ENCODE measurements at regions of chr11 and their contacts with region 1.

Region 1: GRCh38 chr11:3021125-3021524 is 29.0 kb upstream of the NAP1L4 start:
- DNase-seq: peak; percentile 64
- H3K4me3 Mint-ChIP-seq: no peak overlapping the region
- H3K27ac Mint-ChIP-seq: no peak overlapping the region
- H3K4me1 Mint-ChIP-seq: peaks cover 68% of the 10 kb centered on the region
- H3K27me3 Mint-ChIP-seq: no peaks in the 10 kb centered on the region

Region 2: DNA sequence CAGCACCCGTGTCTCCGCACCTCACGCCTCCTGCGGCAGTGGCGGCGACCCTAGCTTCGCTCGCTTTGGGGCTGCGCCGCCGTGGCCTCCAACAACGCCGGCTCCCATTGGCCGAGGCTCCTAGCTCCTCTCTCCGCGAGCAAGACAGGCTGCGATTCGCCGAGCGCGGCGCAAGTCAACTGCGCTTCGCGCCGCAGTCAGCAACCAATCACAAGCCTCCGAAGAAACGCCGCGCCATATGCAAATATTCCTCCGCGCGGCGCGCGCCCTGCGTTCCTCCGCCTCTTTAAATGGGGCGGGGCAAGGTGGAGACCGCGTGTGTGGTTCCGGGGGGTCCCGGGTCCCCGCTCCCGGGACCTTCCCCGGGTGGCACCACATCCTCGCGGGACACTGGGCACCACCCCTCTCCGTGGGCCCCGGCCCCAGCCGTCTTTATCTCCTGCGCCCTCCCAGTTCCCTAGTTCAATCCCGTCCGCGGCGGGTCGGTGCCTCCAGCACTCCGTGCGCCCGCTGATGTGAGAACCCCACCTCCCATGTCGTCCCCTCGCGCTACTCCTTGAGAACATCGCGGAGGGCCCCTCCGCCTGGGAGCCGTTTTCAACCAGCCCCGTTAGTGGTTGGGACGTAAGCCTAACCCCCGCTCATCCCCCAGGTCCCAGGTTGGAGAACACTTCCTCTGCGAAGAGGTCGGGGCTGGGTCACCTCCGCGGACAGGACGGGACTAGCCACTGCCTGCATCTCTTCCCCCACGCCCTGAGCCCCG is 28.7 kb before region 1 on chr11 and contains the start of gene NAP1L4:
- CTCF ChIA-PET with region 1: interaction called, 13 read pairs
- DNase-seq: peak; percentile 98
- H3K4me3 Mint-ChIP-seq: peak within 1 kb of the TSS; percentile 96
- H3K27ac Mint-ChIP-seq: peak within 1 kb of the TSS; percentile 98
- H3K4me1 Mint-ChIP-seq: peaks cover 31% of the 10 kb centered on the region
- H3K27me3 Mint-ChIP-seq: peaks cover 4% of the 10 kb centered on the region

Region 3: DNA sequence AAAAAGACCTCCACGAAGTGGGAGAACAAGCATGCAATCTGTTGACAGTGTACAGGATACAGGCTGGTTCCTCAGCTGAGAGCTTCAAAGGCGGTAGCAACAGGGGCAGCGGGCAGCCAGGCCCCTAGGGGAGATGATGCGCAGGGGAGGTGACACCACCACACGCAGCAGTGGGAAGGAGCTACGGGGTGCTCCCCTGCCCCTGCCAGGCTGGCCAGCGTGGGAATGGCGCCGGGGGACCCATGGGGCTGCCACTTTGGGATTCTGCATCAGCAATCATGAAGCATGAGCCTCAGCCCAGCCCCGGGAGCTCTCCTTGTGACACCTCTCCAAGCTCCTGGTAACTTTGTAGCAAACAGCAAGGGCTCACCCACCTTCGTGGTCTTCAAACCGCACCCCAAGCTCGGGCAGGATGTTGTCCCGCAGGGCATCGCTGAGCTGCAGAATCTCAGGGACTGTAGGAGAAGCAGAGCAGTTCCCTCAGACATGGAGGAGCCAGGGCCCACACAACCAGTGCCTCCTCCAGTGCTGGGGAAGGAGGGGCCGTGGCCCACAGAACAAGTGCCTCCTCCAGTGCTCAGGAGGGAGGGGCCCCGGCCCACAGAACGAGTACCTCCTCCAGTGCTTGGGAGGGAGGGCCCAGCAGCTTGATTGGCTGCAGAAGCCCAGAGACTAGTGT is 14.5 kb before region 1 on chr11:
- CTCF ChIA-PET with region 1: no interaction called
- DNase-seq: peak; percentile 47
- H3K4me3 Mint-ChIP-seq: no peak overlapping the region
- H3K27ac Mint-ChIP-seq: peak overlapping the region; percentile 65
- H3K4me1 Mint-ChIP-seq: peaks cover 40% of the 10 kb centered on the region
- H3K27me3 Mint-ChIP-seq: no peaks in the 10 kb centered on the region

Measured in activated naive CD4-positive, alpha-beta T cell treated with anti-CD3 and anti-CD28 coated beads, Interleukin-2, amount 10 ng/mL, durations not matched to agents 7 days and 5 days (primary cell).